ENCODE measurements at regions of chr15 and their contacts with region 1.

Region 1: GRCh38 chr15:67303490-67304363 is 49.1 kb downstream of the IQCH start:
- DNase-seq: peak in 7 of 9 donors; percentile 22 to 63 (median 40)
- ATAC-seq: no peak
- H3K4me3 ChIP-seq: no peak overlapping the region
- H3K4me3 Mint-ChIP-seq: no peak overlapping the region
- H3K27ac ChIP-seq: no peak overlapping the region
- H3K27ac Mint-ChIP-seq: no peak overlapping the region
- H3K4me1 ChIP-seq: no peaks in the 10 kb centered on the region
- H3K4me1 Mint-ChIP-seq: no peaks in the 10 kb centered on the region
- H3K27me3 ChIP-seq: no peaks in the 10 kb centered on the region
- H3K27me3 Mint-ChIP-seq: peaks cover 0 to 9% (median 0%) of the 10 kb centered on the region in 5 donors

Region 2: GRCh38 chr15:66946578-66947164 is 357.1 kb before region 1 on chr15:
- CTCF ChIA-PET with region 1: interaction called, 48 read pairs
- POLR2A ChIA-PET with region 1: interaction called, 4 read pairs
- intact Hi-C with region 1: loop called (anchors 1 kb)
- DNase-seq: peak; percentile 50 to 78 (median 68)
- ATAC-seq: peak; percentile 86
- H3K4me3 ChIP-seq: no peak overlapping the region
- H3K4me3 Mint-ChIP-seq: peak overlapping the region in 2 of 10 donors; percentile 17
- H3K27ac ChIP-seq: no peak overlapping the region
- H3K27ac Mint-ChIP-seq: no peak overlapping the region
- H3K4me1 ChIP-seq: no peaks in the 10 kb centered on the region
- H3K4me1 Mint-ChIP-seq: peaks cover 0 to 26% (median 4%) of the 10 kb centered on the region in 7 donors
- H3K27me3 ChIP-seq: no peaks in the 10 kb centered on the region
- H3K27me3 Mint-ChIP-seq: peaks cover 0 to 9% (median 0%) of the 10 kb centered on the region in 5 donors

Region 3: GRCh38 chr15:67033571-67034044 is 270.1 kb before region 1 on chr15:
- CTCF ChIA-PET with region 1: interaction called, 3 read pairs
- POLR2A ChIA-PET with region 1: no interaction called
- intact Hi-C with region 1: loop called in 1 of 2 experiments (anchors 2 kb)
- DNase-seq: peak in 6 of 9 donors; percentile 10 to 35 (median 24)
- ATAC-seq: peak; percentile 56
- H3K4me3 ChIP-seq: peak overlapping the region; percentile 41
- H3K4me3 Mint-ChIP-seq: peak overlapping the region in 6 of 10 donors; percentile 30 to 75 (median 68)
- H3K27ac ChIP-seq: no peak overlapping the region
- H3K27ac Mint-ChIP-seq: peak overlapping the region in 3 of 9 donors; percentile 20 to 41 (median 20)
- H3K4me1 ChIP-seq: peaks cover 4 to 12% of the 10 kb centered on the region in 2 donors
- H3K4me1 Mint-ChIP-seq: peaks cover 3 to 24% (median 14%) of the 10 kb centered on the region in 7 donors
- H3K27me3 ChIP-seq: no peaks in the 10 kb centered on the region
- H3K27me3 Mint-ChIP-seq: peaks cover 0 to 16% (median 0%) of the 10 kb centered on the region in 5 donors

Region 4: GRCh38 chr15:67134067-67134838 is 169.5 kb before region 1 on chr15:
- CTCF ChIA-PET with region 1: no interaction called
- POLR2A ChIA-PET with region 1: no interaction called
- intact Hi-C with region 1: loop called in 1 of 2 experiments (anchors 10 kb)
- DNase-seq: peak; percentile 29 to 82 (median 78)
- ATAC-seq: peak; percentile 97
- H3K4me3 ChIP-seq: peak overlapping the region; percentile 41
- H3K4me3 Mint-ChIP-seq: peak overlapping the region; percentile 77 to 95 (median 85)
- H3K27ac ChIP-seq: peak overlapping the region; percentile 91
- H3K27ac Mint-ChIP-seq: peak overlapping the region; percentile 96 to 100 (median 98)
- H3K4me1 ChIP-seq: peaks cover 46 to 72% of the 10 kb centered on the region in 2 donors
- H3K4me1 Mint-ChIP-seq: peaks cover 41 to 93% (median 88%) of the 10 kb centered on the region in 7 donors
- H3K27me3 ChIP-seq: no peaks in the 10 kb centered on the region
- H3K27me3 Mint-ChIP-seq: no peaks in the 10 kb centered on the region

Region 5: DNA sequence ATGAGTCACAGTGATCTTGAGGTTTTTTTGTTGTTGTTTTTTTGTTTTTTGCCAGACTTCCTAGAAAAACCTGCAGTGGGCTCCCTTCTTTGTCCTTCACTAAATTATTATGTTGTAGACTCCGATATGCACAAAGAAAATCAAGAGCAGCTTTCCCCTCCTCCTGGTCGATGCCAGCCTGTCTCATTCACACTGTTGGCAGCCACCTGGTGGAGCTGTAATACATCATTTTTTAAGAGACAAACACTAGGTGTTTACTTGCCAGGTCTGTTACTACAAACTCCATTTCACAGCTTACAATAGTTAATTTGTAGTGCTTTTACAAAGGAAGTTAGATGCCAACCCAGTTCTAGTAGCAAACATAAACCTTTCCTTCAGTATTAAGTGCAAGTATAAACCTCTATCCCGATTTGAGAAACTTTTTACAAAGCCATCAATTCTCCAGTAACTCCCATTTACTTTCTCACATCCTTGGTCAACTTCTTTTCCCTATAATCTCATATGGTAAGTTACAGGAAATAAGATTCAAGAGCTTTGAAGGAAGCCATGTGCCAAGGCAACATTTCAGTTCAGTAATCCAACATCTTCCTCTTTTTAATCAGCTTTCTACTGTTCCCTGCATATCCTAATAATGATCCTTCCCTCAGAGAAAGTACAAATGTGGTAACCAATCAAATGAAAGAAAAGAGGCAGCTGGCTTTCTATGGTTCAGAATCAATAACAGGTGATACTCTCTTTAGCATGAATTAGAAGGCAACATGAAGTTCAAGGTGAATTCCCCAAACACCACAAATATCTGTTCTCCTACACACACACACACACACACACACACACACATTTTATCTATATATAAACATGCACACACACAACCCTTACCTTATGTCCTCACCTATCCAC is 63.2 kb before region 1 on chr15:
- CTCF ChIA-PET with region 1: interaction called, 9 read pairs
- POLR2A ChIA-PET with region 1: no interaction called
- intact Hi-C with region 1: loop called (anchors 1 to 2 kb)
- DNase-seq: peak in 3 of 9 donors; percentile 9 to 30 (median 12)
- ATAC-seq: peak; percentile 70
- H3K4me3 ChIP-seq: peak overlapping the region; percentile 23
- H3K4me3 Mint-ChIP-seq: peak overlapping the region in 9 of 10 donors; percentile 18 to 71 (median 45)
- H3K27ac ChIP-seq: no peak overlapping the region
- H3K27ac Mint-ChIP-seq: peak overlapping the region in 8 of 9 donors; percentile 46 to 88 (median 70)
- H3K4me1 ChIP-seq: peaks cover 16 to 34% of the 10 kb centered on the region in 2 donors
- H3K4me1 Mint-ChIP-seq: peaks cover 34 to 67% (median 56%) of the 10 kb centered on the region in 7 donors
- H3K27me3 ChIP-seq: no peaks in the 10 kb centered on the region
- H3K27me3 Mint-ChIP-seq: no peaks in the 10 kb centered on the region

Region 6: DNA sequence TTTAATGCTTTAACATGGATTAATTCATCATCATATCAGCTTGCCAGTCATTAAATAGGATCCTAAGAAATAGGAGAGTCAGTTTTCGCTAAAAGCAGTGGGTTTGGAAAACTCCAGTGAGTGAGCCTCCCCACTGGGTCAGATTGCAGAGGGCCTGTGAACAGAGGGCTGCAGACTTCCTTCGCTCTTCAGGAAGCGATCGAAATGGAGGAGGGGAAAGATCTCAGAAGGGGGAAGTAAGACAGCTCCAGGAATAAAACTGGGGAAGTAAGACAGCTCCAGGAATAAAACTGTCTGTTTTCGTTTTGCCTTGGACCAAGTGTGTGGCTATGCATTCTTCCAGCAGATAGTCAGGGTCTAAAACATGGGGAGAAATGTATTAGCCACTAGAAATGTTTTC is 92.4 kb after region 1 on chr15:
- CTCF ChIA-PET with region 1: no interaction called
- POLR2A ChIA-PET with region 1: no interaction called
- intact Hi-C with region 1: no loop called
- DNase-seq: no peak
- ATAC-seq: no peak
- H3K4me3 ChIP-seq: no peak overlapping the region
- H3K4me3 Mint-ChIP-seq: no peak overlapping the region
- H3K27ac ChIP-seq: no peak overlapping the region
- H3K27ac Mint-ChIP-seq: no peak overlapping the region
- H3K4me1 ChIP-seq: no peaks in the 10 kb centered on the region
- H3K4me1 Mint-ChIP-seq: peaks cover 0 to 2% (median 0%) of the 10 kb centered on the region in 7 donors
- H3K27me3 ChIP-seq: no peaks in the 10 kb centered on the region
- H3K27me3 Mint-ChIP-seq: peaks cover 0 to 17% (median 7%) of the 10 kb centered on the region in 5 donors

Region 7: DNA sequence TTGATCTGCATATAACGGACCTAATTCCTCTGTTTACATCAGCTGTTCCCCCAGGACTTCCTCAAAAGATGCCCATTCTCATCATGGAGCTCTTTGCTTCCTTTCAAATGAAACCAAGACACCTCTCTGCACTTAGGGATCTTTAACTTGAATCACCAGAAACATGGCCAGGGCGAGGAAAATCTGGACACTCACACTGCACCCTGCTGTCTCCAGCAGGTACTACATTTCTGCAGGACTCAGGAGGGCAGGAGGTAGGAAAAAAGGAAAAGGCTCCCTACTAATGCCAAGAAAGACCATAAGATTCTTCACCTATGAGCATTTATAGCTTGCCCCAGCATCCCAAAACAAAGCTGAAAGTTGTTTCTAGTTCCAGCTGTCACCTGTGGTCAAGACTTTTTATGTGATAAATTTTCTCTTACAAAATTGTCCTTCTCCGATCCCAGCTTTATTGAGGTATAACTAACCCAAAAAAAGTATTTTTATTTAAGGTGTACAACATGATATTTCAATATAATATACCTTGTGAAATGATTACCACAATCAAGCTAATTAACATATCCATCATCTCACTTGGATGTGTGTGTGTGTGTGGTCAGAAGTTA is 129.9 kb after region 1 on chr15:
- CTCF ChIA-PET with region 1: no interaction called
- POLR2A ChIA-PET with region 1: no interaction called
- intact Hi-C with region 1: loop called in 1 of 2 experiments (anchors 10 kb)
- DNase-seq: peak in 2 of 9 donors; percentile 5 to 6
- ATAC-seq: peak; percentile 55
- H3K4me3 ChIP-seq: no peak overlapping the region
- H3K4me3 Mint-ChIP-seq: no peak overlapping the region
- H3K27ac ChIP-seq: no peak overlapping the region
- H3K27ac Mint-ChIP-seq: no peak overlapping the region
- H3K4me1 ChIP-seq: no peaks in the 10 kb centered on the region
- H3K4me1 Mint-ChIP-seq: no peaks in the 10 kb centered on the region
- H3K27me3 ChIP-seq: no peaks in the 10 kb centered on the region
- H3K27me3 Mint-ChIP-seq: peaks cover 0 to 3% (median 0%) of the 10 kb centered on the region in 5 donors

Region 8: DNA sequence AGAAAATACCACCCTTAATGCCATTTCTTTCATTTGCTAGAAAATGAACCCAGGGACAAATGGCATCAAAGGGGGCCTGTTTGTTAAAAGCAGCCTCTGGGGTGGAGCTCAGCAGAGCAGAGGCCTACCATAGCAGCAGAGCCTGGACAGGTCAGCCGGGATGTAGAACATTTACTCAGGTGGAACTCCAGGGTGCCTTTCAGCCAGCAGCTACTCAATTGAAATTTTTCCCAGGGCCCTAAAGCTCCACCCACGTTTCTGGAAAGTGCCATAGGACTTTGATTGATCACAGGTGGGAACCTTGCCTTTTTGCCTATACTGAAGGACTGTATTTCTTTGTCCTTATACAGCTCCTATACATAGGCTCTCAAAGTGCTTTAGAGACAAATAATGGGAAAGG is 142.7 kb after region 1 on chr15:
- CTCF ChIA-PET with region 1: no interaction called
- POLR2A ChIA-PET with region 1: no interaction called
- intact Hi-C with region 1: no loop called
- DNase-seq: no peak
- ATAC-seq: no peak
- H3K4me3 ChIP-seq: no peak overlapping the region
- H3K4me3 Mint-ChIP-seq: no peak overlapping the region
- H3K27ac ChIP-seq: no peak overlapping the region
- H3K27ac Mint-ChIP-seq: no peak overlapping the region
- H3K4me1 ChIP-seq: no peaks in the 10 kb centered on the region
- H3K4me1 Mint-ChIP-seq: no peaks in the 10 kb centered on the region
- H3K27me3 ChIP-seq: no peaks in the 10 kb centered on the region
- H3K27me3 Mint-ChIP-seq: peaks cover 0 to 12% (median 0%) of the 10 kb centered on the region in 5 donors

Region 9: GRCh38 chr15:67593562-67593961 is 289.8 kb after region 1 on chr15:
- CTCF ChIA-PET with region 1: no interaction called
- POLR2A ChIA-PET with region 1: no interaction called
- intact Hi-C with region 1: no loop called
- DNase-seq: no peak
- ATAC-seq: no peak
- H3K4me3 ChIP-seq: no peak overlapping the region
- H3K4me3 Mint-ChIP-seq: no peak overlapping the region
- H3K27ac ChIP-seq: no peak overlapping the region
- H3K27ac Mint-ChIP-seq: no peak overlapping the region
- H3K4me1 ChIP-seq: no peaks in the 10 kb centered on the region
- H3K4me1 Mint-ChIP-seq: peaks cover 0 to 2% (median 0%) of the 10 kb centered on the region in 7 donors
- H3K27me3 ChIP-seq: no peaks in the 10 kb centered on the region
- H3K27me3 Mint-ChIP-seq: no peaks in the 10 kb centered on the region

Region 10: DNA sequence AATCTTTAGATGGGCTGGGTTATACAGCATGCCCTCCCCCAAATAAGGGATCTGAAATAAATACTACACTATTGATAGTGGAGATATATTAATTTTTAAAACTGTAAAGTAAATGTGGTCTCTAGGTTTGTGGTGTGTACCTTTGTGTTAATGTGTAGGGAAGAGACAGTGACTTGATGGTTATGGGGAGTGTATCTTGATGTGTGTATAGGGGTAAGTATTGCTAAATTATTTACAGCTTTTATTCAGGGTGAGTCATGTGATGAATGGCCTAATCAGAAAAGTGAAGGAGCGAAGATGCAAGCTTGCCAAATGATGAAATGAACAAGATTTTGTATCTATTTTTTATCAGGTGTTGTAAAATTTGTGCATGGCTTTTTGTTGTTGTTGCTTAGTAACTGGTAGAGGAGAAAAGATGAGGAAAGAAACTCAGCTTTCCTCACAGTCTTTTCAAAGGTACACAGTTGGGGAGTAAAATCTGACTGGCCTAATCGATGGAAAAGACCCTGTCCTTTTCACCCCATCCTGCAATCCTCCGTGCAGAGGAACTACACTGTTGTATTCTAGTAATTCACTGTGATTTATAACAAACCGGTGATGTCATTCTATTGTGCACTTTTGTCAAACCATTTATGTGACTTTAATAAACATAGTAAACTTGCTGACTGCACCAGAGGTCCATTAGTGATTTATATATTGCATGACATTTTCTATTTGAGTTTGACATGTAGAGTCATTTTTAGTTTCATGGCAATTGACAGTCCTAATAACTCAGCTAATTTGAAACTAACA is 991.5 kb after region 1 on chr15:
- CTCF ChIA-PET with region 1: no interaction called
- POLR2A ChIA-PET with region 1: no interaction called
- intact Hi-C with region 1: no loop called
- DNase-seq: no peak
- ATAC-seq: no peak
- H3K4me3 ChIP-seq: no peak overlapping the region
- H3K4me3 Mint-ChIP-seq: no peak overlapping the region
- H3K27ac ChIP-seq: no peak overlapping the region
- H3K27ac Mint-ChIP-seq: peak overlapping the region in 3 of 9 donors; percentile 14 to 82 (median 28)
- H3K4me1 ChIP-seq: peaks cover 10 to 15% of the 10 kb centered on the region in 2 donors
- H3K4me1 Mint-ChIP-seq: peaks cover 21 to 73% (median 46%) of the 10 kb centered on the region in 7 donors
- H3K27me3 ChIP-seq: no peaks in the 10 kb centered on the region
- H3K27me3 Mint-ChIP-seq: no peaks in the 10 kb centered on the region